ENCODE measurements at regions of chr4 and their contacts with region 1.

Region 1: GRCh38 chr4:176150356-176150682 is 45.1 kb downstream of the SPATA4 start:
- DNase-seq: no peak
- ATAC-seq: no peak
- H3K4me3 ChIP-seq: no peak overlapping the region
- H3K27ac ChIP-seq: no peak overlapping the region
- H3K4me1 ChIP-seq: no peaks in the 10 kb centered on the region
- H3K27me3 ChIP-seq: no peaks in the 10 kb centered on the region

Region 2: DNA sequence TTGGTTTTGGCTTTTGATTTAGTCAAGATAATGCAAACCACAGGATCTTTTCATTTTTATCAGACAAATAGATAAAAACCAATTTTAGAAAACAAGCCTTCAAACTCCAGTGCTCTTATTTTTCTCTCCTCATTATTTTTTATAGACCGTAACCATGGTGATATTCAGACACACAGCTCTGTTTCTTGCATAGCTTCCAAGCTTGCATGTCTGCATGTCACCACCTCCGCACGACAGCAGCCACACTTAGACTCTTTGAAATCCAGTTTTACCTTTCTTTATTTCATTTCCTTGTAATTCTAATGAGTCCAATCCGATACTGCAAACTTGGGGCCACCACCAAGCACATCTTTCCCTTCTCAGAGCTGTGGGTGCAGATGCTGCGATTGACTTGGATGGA is 243.9 kb before region 1 on chr4:
- intact Hi-C with region 1: no loop called
- DNase-seq: no peak
- ATAC-seq: no peak
- H3K4me3 ChIP-seq: no peak overlapping the region
- H3K27ac ChIP-seq: no peak overlapping the region
- H3K4me1 ChIP-seq: no peaks in the 10 kb centered on the region
- H3K27me3 ChIP-seq: no peaks in the 10 kb centered on the region

Region 3: DNA sequence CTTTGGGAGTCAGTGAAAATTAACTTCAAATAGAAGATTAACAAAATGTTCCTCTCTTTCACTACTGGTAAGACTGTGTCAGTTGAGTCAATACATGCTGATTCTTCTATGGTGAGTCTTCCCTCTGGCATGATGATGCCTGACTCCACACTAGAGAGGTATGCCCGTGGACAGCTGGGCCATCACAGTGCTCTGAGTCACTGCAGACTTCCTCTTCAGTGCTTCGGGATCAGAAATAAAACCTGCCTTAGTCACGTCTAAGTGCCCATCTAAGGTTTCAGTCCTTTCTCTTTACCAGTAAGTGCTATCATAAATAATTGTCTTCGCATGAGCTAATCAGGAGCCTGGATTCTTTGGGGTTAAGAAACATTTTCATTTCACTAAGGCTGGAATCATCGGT is 120.3 kb after region 1 on chr4:
- intact Hi-C with region 1: loop called in 1 of 2 experiments (anchors 5 kb)
- DNase-seq: peak in 1 of 2 donors; percentile 48
- ATAC-seq: no peak
- H3K4me3 ChIP-seq: no peak overlapping the region
- H3K27ac ChIP-seq: no peak overlapping the region
- H3K4me1 ChIP-seq: peaks cover 0 to 3% of the 10 kb centered on the region in 2 donors
- H3K27me3 ChIP-seq: no peaks in the 10 kb centered on the region

Region 4: DNA sequence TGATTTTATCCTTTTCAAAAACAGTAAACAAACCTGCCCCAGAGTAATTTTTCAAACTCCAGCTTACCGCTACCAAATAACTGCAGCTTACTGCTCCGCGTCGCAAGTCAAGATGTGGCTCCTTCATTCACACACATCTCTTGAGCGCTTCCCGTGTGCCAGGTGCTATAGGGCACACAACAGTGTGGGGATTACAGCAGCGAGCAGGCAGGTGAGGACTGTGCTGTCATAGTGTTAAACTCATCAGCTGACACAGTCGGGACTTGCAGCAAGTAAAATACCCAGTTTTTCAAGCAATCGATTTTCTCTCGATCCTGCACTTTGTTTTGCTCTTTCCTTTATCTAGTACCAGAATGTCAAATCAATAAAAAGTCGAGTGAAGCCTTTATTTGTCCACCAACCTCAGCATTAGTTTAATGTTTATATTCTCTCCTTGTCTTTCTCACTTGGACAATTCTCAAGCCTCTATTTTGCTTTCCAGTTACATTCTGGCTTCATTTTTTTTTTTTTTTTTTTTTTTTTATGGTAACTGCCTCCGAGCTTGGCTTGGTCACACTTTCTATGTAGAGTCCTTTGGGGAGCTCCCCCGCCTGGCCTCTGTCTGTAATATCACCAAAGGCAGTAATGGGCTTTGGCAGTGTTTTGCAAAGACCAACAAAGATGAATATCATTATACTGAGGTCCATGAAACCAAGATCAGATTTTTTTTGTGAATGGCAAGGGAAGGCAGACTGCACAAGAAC is 127.0 kb after region 1 on chr4:
- intact Hi-C with region 1: loop called (anchors 2 to 5 kb)
- DNase-seq: peak; percentile 59 to 87
- ATAC-seq: peak; percentile 80
- H3K4me3 ChIP-seq: peak overlapping the region in 1 of 2 donors; percentile 41
- H3K27ac ChIP-seq: no peak overlapping the region
- H3K4me1 ChIP-seq: peaks cover 0 to 3% of the 10 kb centered on the region in 2 donors
- H3K27me3 ChIP-seq: no peaks in the 10 kb centered on the region

Region 5: GRCh38 chr4:176319704-176320339 is 169.5 kb after region 1 on chr4 and contains the start of gene SPCS3:
- intact Hi-C with region 1: loop called in 1 of 2 experiments (anchors 5 kb)
- DNase-seq: peak; percentile 98 to 99
- ATAC-seq: peak; percentile 99
- H3K4me3 ChIP-seq: peak within 1 kb of the TSS; percentile 88 to 92
- H3K27ac ChIP-seq: peak within 1 kb of the TSS; percentile 92 to 97
- H3K4me1 ChIP-seq: no peaks in the 10 kb centered on the region
- H3K27me3 ChIP-seq: no peaks in the 10 kb centered on the region
- total RNA-seq, gene SPCS3: 124 to 168 TPM

Region 6: GRCh38 chr4:176425035-176425434 is 274.7 kb after region 1 on chr4:
- intact Hi-C with region 1: no loop called
- DNase-seq: no peak
- ATAC-seq: no peak
- H3K4me3 ChIP-seq: no peak overlapping the region
- H3K27ac ChIP-seq: no peak overlapping the region
- H3K4me1 ChIP-seq: peaks cover 0 to 1% of the 10 kb centered on the region in 2 donors
- H3K27me3 ChIP-seq: no peaks in the 10 kb centered on the region

Measured in aorta (tissue), 5 donors.